Heart right ventricle (tissue), 16 donors: ENCODE measurements at regions of chr13 and their contacts with region 1.

Region 1: GRCh38 chr13:113499936-113500335 is 9.4 kb upstream of the DCUN1D2 start:
- DNase-seq: no peak
- ATAC-seq: peak in 1 of 8 donors; percentile 24
- H3K4me3 ChIP-seq: no peak overlapping the region
- H3K27ac ChIP-seq: peak overlapping the region in 5 of 10 donors; percentile 78 to 88 (median 83)
- H3K4me1 ChIP-seq: peaks cover 0 to 56% (median 39%) of the 10 kb centered on the region in 9 donors
- H3K27me3 ChIP-seq: no peaks in the 10 kb centered on the region
- CTCF ChIP-seq: no peak

Region 2: GRCh38 chr13:113275387-113275786 is 224.5 kb before region 1 on chr13:
- intact Hi-C with region 1: no loop called
- DNase-seq: no peak
- ATAC-seq: peak in 5 of 8 donors; percentile 52 to 68 (median 56)
- H3K4me3 ChIP-seq: no peak overlapping the region
- H3K27ac ChIP-seq: no peak overlapping the region
- H3K4me1 ChIP-seq: peaks cover 0 to 30% (median 0%) of the 10 kb centered on the region in 9 donors
- H3K27me3 ChIP-seq: no peaks in the 10 kb centered on the region
- CTCF ChIP-seq: peak in 8 of 9 donors; percentile 9 to 59 (median 53)

Region 3: DNA sequence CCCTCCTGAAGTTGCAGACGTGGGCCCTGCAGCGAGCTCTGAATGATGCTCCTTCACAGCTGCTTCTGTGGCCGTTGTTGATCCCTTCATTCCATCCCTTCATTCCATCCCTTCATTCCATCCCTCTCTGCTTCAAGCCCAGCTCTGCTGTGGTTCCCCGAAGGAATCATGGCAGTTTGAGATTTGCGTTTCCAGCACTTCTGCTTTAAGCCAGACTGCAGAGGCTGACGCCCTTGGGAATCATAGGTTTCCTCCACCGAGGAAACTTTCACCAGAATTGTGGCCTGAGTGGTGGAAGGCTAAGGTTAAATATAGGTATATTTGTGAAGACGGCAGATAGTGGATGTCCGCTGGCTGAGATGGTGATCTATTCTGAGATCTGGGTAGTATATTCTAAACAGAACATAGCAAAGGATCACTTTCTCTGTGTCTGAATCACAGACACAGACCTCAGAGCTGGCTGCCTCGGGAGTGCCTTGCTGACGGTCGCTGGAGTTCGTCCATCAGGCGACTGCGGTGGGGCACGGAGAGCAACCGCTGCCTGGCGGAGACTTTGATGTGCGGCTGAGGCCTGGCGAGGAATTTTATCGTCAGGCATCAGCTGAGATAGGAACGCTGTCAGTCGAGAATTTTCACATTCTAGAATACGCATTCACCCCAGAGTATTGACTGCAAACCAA is 33.4 kb after region 1 on chr13:
- intact Hi-C with region 1: loop called in 2 of 10 experiments (anchors 1 to 5 kb)
- DNase-seq: no peak
- ATAC-seq: peak in 6 of 8 donors; percentile 44 to 66 (median 54)
- H3K4me3 ChIP-seq: no peak overlapping the region
- H3K27ac ChIP-seq: peak overlapping the region in 4 of 10 donors; percentile 29 to 41 (median 37)
- H3K4me1 ChIP-seq: peaks cover 0 to 21% (median 2%) of the 10 kb centered on the region in 9 donors
- H3K27me3 ChIP-seq: no peaks in the 10 kb centered on the region
- CTCF ChIP-seq: no peak

Region 4: GRCh38 chr13:113539822-113540221 is 39.9 kb after region 1 on chr13:
- intact Hi-C with region 1: loop called in 2 of 10 experiments (anchors 5 kb)
- DNase-seq: no peak
- ATAC-seq: peak in 2 of 8 donors; percentile 30 to 53
- H3K4me3 ChIP-seq: no peak overlapping the region
- H3K27ac ChIP-seq: no peak overlapping the region
- H3K4me1 ChIP-seq: peaks cover 0 to 3% (median under 1%) of the 10 kb centered on the region in 9 donors
- H3K27me3 ChIP-seq: no peaks in the 10 kb centered on the region
- CTCF ChIP-seq: no peak